Natural killer cell (primary cell): ENCODE measurements at regions of chr12 and their contacts with region 1.

Region 1: GRCh38 chr12:121351820-121352681 is at the start of gene ANAPC5:
- DNase-seq: peak; percentile 82 to 96
- ATAC-seq: peak; percentile 97 to 99 (median 97)
- H3K4me3 ChIP-seq: peak within 1 kb of the TSS; percentile 80
- H3K4me3 Mint-ChIP-seq: peak within 1 kb of the TSS; percentile 97
- H3K27ac ChIP-seq: peak within 1 kb of the TSS; percentile 65
- H3K27ac Mint-ChIP-seq: peak within 1 kb of the TSS; percentile 96
- H3K4me1 ChIP-seq: peaks cover 30% of the 10 kb centered on the region
- H3K4me1 Mint-ChIP-seq: peaks cover 21 to 26% of the 10 kb centered on the region in 2 donors
- H3K27me3 ChIP-seq: no peaks in the 10 kb centered on the region
- H3K27me3 Mint-ChIP-seq: peaks cover 0 to 2% of the 10 kb centered on the region in 2 donors
- CTCF ChIP-seq: no peak
- total RNA-seq, gene ANAPC5: 134 to 171 (median 163) TPM

Region 2: DNA sequence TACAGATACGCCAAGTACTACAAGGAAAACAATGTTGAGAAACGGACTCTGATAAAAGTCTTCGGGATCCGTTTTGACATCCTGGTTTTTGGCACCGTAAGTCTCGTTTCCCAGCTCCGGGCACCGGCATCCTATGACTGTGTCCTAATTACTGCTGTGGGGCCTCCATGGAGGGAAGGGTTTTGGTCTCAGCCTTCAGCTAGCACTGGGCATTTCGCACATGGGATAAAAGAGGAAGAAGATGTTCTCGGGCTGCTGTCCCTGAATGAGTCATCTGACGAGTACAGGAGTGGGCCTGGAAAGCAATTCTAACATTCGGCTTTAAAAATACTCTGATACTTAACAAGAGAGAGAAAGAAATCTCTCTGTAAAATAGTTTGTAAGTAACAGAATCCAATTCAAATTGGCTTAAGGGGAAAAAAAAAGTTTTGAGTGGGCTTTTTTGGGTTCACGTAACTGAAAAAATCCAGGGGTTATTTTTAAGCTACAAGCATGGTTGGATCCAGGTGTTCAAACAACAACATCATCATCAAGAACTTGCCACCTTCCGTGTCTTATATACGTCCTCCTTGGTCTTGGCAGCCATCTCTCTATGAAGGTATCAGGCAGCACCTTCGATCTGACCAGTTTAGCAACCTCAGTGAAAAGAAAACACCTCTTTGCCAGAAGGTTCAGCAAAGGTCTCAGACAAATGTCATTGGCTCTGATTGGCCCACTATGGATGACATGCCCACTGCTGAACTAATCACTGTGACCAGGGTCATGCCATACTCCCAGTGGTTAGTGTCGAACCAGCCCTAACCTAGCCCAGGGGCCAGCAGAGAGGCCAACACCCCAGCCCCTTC is 176.4 kb before region 1 on chr12:
- intact Hi-C with region 1: no loop called
- DNase-seq: peak in 1 of 2 donors; percentile 6
- ATAC-seq: no peak
- H3K4me3 ChIP-seq: no peak overlapping the region
- H3K4me3 Mint-ChIP-seq: no peak overlapping the region
- H3K27ac ChIP-seq: no peak overlapping the region
- H3K27ac Mint-ChIP-seq: no peak overlapping the region
- H3K4me1 ChIP-seq: no peaks in the 10 kb centered on the region
- H3K4me1 Mint-ChIP-seq: no peaks in the 10 kb centered on the region
- H3K27me3 ChIP-seq: no peaks in the 10 kb centered on the region
- H3K27me3 Mint-ChIP-seq: no peaks in the 10 kb centered on the region
- CTCF ChIP-seq: no peak

Region 3: GRCh38 chr12:121238604-121239350 is 113.3 kb before region 1 on chr12:
- intact Hi-C with region 1: no loop called
- DNase-seq: peak in 1 of 2 donors; percentile 27
- ATAC-seq: no peak
- H3K4me3 ChIP-seq: no peak overlapping the region
- H3K4me3 Mint-ChIP-seq: no peak overlapping the region
- H3K27ac ChIP-seq: peak overlapping the region; percentile 84
- H3K27ac Mint-ChIP-seq: peak overlapping the region; percentile 97 to 98
- H3K4me1 ChIP-seq: peaks cover 37% of the 10 kb centered on the region
- H3K4me1 Mint-ChIP-seq: peaks cover 29 to 30% of the 10 kb centered on the region in 2 donors
- H3K27me3 ChIP-seq: no peaks in the 10 kb centered on the region
- H3K27me3 Mint-ChIP-seq: no peaks in the 10 kb centered on the region
- CTCF ChIP-seq: no peak

Region 4: DNA sequence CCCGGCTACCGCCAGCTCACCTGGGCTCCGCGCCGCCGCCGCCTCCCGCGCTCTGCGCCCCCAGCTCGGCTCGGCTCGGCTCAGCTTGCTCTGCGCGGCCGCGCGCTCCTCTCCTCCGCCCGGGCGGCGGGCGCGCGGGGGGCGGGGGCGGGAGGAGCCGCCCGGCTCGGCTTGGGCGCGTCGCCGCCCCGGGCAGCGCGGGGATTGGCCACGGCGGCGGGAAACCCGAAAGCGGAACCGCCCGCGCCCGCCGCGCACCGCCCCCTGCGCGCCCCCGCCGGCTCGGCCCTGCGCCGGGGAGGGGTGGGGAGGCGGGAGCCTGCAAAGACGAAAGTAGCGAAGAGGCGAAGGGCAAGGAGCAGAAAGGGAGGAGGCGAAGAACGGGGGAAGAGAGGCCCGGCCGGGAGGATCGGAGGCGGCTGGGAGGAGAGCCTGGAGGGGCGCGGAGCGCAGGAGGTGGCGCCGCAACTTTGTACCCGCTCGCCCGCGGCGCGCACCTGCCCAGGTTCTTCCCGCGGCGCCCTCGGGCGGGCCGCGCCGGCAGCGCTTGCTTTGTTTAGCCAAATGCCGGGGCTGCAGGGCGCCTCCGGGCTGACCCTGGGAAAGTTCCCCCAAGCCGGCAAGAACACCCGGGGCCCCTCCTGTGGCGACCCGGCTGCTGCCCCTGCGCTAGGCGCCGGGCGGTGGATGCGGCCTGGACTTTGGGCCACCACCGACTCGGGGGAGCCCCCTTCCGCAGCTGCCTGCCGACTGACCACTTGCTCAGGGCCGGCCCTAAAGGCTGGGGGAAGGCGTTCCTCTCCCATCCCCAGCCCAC is 55.2 kb before region 1 on chr12 and contains the start of gene CAMKK2:
- intact Hi-C with region 1: loop called (anchors 2 kb)
- DNase-seq: peak; percentile 91 to 94
- ATAC-seq: peak; percentile 89 to 95 (median 91)
- H3K4me3 ChIP-seq: peak within 1 kb of the TSS; percentile 65
- H3K4me3 Mint-ChIP-seq: peak within 1 kb of the TSS; percentile 87
- H3K27ac ChIP-seq: peak within 1 kb of the TSS; percentile 55
- H3K27ac Mint-ChIP-seq: peak within 1 kb of the TSS; percentile 23 to 84
- H3K4me1 ChIP-seq: peaks cover 24% of the 10 kb centered on the region
- H3K4me1 Mint-ChIP-seq: peaks cover 0 to 14% of the 10 kb centered on the region in 2 donors
- H3K27me3 ChIP-seq: no peaks in the 10 kb centered on the region
- H3K27me3 Mint-ChIP-seq: no peaks in the 10 kb centered on the region
- CTCF ChIP-seq: peak; percentile 22
- total RNA-seq, gene CAMKK2: 19.6 to 27.4 (median 20.9) TPM

Region 5: GRCh38 chr12:121399391-121400331 is 47.6 kb after region 1 on chr12 and contains the start of gene RNF34:
- intact Hi-C with region 1: loop called (anchors 1 kb)
- DNase-seq: peak; percentile 94 to 99
- ATAC-seq: peak; percentile 90 to 98 (median 94)
- H3K4me3 ChIP-seq: peak within 1 kb of the TSS; percentile 97
- H3K4me3 Mint-ChIP-seq: peak within 1 kb of the TSS; percentile 98
- H3K27ac ChIP-seq: peak within 1 kb of the TSS; percentile 95
- H3K27ac Mint-ChIP-seq: peak within 1 kb of the TSS; percentile 92 to 94
- H3K4me1 ChIP-seq: peaks cover 13% of the 10 kb centered on the region
- H3K4me1 Mint-ChIP-seq: peaks cover 25 to 35% of the 10 kb centered on the region in 2 donors
- H3K27me3 ChIP-seq: no peaks in the 10 kb centered on the region
- H3K27me3 Mint-ChIP-seq: no peaks in the 10 kb centered on the region
- CTCF ChIP-seq: no peak
- total RNA-seq, gene RNF34: 62.3 to 78.4 (median 73.4) TPM

Region 6: DNA sequence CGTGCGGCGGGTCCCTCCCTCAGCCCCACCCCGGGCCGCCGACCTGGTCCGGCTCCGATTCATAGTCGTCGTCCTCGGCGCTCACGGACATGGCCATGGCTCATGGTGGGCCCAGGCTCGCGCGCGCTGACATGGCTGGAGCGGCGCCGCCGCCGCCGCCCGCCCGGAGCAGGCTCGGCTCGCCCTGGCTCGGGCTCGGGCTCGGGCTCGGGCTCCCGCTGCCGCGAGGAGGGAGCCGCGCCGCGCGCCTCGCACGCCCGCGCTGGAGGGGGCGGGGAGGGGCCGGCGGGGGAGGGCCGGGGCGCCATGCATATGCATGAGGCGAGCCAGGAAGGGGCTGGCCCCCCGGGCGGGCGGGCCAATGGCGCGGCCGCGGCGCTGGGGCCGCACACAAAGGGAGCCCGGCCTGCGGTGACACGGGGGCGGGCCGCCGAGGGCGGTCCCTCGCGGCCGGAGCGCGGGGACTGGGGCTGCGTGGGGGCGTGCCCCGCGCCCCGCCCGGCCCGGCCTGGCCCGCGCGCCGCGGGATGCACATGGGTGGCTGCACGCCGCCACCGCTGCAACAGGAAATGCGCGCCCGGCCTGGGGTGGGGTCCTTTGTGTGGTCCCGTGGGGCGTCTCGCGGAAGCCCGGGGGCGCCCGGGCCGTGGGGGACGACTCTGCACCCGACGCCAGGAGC is 115.2 kb after region 1 on chr12:
- intact Hi-C with region 1: loop called (anchors 5 kb)
- DNase-seq: peak; percentile 84 to 92
- ATAC-seq: peak; percentile 87 to 97 (median 89)
- H3K4me3 ChIP-seq: peak overlapping the region; percentile 38
- H3K4me3 Mint-ChIP-seq: peak overlapping the region; percentile 50
- H3K27ac ChIP-seq: peak overlapping the region; percentile 55
- H3K27ac Mint-ChIP-seq: peak overlapping the region in 1 of 2 donors; percentile 83
- H3K4me1 ChIP-seq: peaks cover 24% of the 10 kb centered on the region
- H3K4me1 Mint-ChIP-seq: peaks cover 19 to 20% of the 10 kb centered on the region in 2 donors
- H3K27me3 ChIP-seq: no peaks in the 10 kb centered on the region
- H3K27me3 Mint-ChIP-seq: no peaks in the 10 kb centered on the region
- CTCF ChIP-seq: no peak